Left ventricle myocardium inferior (tissue), 1 donor: ENCODE measurements at regions of chr2 and their contacts with region 1.

Region 1: DNA sequence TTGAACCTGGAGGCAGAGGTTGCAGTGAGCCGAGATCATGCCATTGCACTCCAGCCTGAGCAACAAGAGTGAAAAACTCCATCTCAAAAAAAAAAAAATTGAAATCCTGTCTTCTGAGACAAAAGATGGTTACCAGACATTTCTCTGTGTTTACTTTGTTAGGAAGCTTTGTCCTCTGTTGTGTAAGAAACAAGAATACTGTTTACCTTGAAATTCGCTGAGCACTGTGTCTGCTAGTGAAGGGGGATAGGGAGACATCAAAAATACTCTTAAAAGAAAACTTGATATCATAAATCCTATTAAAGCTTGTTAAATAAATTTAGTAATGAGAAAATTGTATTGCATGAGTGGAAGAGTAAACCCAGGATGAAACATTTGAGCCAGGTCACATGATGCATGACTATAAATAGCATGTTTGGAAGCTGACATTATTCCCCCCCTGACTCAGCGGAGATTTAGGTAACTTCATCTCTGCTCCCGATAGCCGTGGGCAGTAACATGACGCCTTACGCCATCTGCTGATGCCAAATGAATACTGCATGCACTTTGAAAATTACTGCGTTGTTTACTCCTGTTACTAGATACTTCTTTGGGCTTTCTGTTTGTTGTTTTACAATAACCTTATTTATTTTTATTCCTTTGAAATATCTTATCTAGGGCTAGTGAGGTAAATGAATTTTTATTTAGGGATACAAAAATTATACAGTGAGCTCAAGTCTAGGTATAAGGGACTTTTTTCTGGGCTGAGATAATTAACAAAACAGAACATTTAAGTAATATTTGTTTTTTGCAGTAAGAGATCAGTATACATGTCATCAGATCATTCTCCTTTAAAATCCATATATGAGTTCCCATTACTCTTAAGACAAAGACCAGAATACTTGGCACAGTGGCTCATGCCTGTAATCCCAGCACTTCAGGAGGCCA is 134.9 kb downstream of the MAP3K20 start:
- DNase-seq: peak; percentile 30
- H3K4me3 ChIP-seq: no peak overlapping the region
- H3K27ac ChIP-seq: peak overlapping the region; percentile 87
- H3K4me1 ChIP-seq: peaks cover 78% of the 10 kb centered on the region
- H3K27me3 ChIP-seq: no peaks in the 10 kb centered on the region
- CTCF ChIP-seq: peak; percentile 92

Region 2: GRCh38 chr2:172806493-172806892 is 404.0 kb before region 1 on chr2:
- intact Hi-C with region 1: loop called (anchors 10 kb)
- DNase-seq: no peak
- H3K4me3 ChIP-seq: no peak overlapping the region
- H3K27ac ChIP-seq: no peak overlapping the region
- H3K4me1 ChIP-seq: peaks cover 5% of the 10 kb centered on the region
- H3K27me3 ChIP-seq: no peaks in the 10 kb centered on the region
- CTCF ChIP-seq: peak; percentile 91

Region 3: GRCh38 chr2:173027181-173028128 is 183.1 kb before region 1 on chr2:
- intact Hi-C with region 1: loop called (anchors 2 kb)
- DNase-seq: peak; percentile 71
- H3K4me3 ChIP-seq: peak overlapping the region; percentile 14
- H3K27ac ChIP-seq: peak overlapping the region; percentile 94
- H3K4me1 ChIP-seq: peaks cover 50% of the 10 kb centered on the region
- H3K27me3 ChIP-seq: no peaks in the 10 kb centered on the region
- CTCF ChIP-seq: peak; percentile 97

Region 4: GRCh38 chr2:173090276-173090877 is 120.2 kb before region 1 on chr2:
- intact Hi-C with region 1: loop called (anchors 5 kb)
- DNase-seq: peak; percentile 30
- H3K4me3 ChIP-seq: peak overlapping the region; percentile 54
- H3K27ac ChIP-seq: peak overlapping the region; percentile 85
- H3K4me1 ChIP-seq: peaks cover 78% of the 10 kb centered on the region
- H3K27me3 ChIP-seq: no peaks in the 10 kb centered on the region
- CTCF ChIP-seq: no peak

Region 5: DNA sequence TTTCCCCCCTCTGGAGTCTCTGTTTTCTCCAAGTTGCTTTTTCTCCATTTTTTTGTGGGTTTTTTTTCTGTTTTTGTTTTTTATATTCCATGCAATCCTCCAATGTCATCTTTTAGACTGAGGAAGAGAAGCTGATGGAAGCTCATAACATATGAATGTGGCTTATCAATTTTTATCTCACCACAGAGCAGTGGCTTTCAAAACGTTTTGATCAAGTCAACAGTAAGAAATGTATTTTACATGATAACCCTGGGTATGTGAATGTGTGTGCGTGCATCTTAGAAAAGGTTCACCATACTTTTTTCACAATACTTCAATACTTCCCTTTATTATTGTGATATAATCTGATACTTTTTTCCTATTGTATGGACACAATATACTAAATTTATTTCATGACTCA is 79.5 kb after region 1 on chr2:
- intact Hi-C with region 1: no loop called
- DNase-seq: no peak
- H3K4me3 ChIP-seq: no peak overlapping the region
- H3K27ac ChIP-seq: no peak overlapping the region
- H3K4me1 ChIP-seq: no peaks in the 10 kb centered on the region
- H3K27me3 ChIP-seq: no peaks in the 10 kb centered on the region
- CTCF ChIP-seq: no peak

Region 6: GRCh38 chr2:173307293-173307692 is 96.8 kb after region 1 on chr2:
- intact Hi-C with region 1: no loop called
- DNase-seq: no peak
- H3K4me3 ChIP-seq: no peak overlapping the region
- H3K27ac ChIP-seq: no peak overlapping the region
- H3K4me1 ChIP-seq: no peaks in the 10 kb centered on the region
- H3K27me3 ChIP-seq: no peaks in the 10 kb centered on the region
- CTCF ChIP-seq: no peak